MCF 10A (cell line): ENCODE measurements at regions of chr12 and their contacts with region 1.

Region 1: GRCh38 chr12:53806721-53807120 is 54.9 kb upstream of the CISTR start:
- DNase-seq: peak; percentile 65
- H3K4me3 Mint-ChIP-seq: no peak overlapping the region
- H3K27ac Mint-ChIP-seq: peak overlapping the region; percentile 52
- H3K4me1 Mint-ChIP-seq: peaks cover 25% of the 10 kb centered on the region
- H3K27me3 Mint-ChIP-seq: no peaks in the 10 kb centered on the region
- CTCF ChIP-seq: no peak

Region 2: GRCh38 chr12:53791735-53792326 is 14.9 kb before region 1 on chr12:
- CTCF ChIA-PET with region 1: interaction called, 19 read pairs
- POLR2A ChIA-PET with region 1: interaction called, 3 read pairs
- intact Hi-C with region 1: no loop called
- DNase-seq: peak; percentile 52
- H3K4me3 Mint-ChIP-seq: no peak overlapping the region
- H3K27ac Mint-ChIP-seq: no peak overlapping the region
- H3K4me1 Mint-ChIP-seq: no peaks in the 10 kb centered on the region
- H3K27me3 Mint-ChIP-seq: no peaks in the 10 kb centered on the region
- CTCF ChIP-seq: peak; percentile 44